ENCODE measurements at regions of chr19 and their contacts with region 1.

Region 1: DNA sequence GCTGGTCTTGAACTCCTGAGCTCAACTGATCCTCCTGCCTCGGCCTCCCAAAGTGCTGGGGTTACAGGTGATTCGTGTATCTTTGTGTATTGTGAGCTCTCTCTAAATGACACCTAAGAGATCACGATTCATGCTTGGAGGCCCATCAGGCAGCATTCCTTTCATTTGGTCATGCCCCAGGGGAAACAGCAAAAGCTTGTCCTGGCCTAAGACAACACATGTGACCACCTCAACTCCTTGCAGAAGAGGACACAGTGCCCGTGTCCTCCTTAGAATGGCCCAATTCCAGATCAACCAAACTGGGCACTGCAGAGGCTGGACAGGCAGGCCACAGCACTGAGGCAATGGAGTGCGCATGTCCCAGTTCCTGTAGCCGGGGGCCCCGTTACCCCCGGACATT is 32.5 kb downstream of the ZC3H4 start:
- DNase-seq: no peak
- ATAC-seq: no peak
- H3K4me3 ChIP-seq: no peak overlapping the region
- H3K27ac ChIP-seq: no peak overlapping the region
- H3K4me1 ChIP-seq: no peaks in the 10 kb centered on the region
- H3K27me3 ChIP-seq: no peaks in the 10 kb centered on the region
- CTCF ChIP-seq: no peak
- EP300 ChIP-seq: no peak
- POLR2A ChIP-seq: no peak
- RAD21 ChIP-seq: no peak

Region 2: DNA sequence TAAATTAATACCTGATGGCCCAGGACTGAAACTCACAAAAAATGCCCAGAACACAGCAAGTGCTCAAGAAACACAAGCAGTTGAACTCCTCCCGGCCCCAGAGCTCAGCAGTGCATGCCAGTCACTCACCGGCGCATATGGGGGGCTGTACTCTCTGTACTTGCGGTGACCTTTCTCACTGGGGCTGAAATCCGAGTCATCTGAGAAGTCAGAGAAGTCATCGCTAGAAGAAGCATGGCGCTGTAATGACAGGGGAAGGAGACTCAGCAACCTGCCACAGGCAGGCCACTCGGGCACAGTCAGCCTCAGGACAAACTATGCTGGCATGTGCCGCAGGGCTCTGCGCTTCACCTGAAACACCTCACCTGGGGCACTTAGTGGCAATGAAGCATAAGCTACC is 12.7 kb after region 1 on chr19:
- CTCF ChIA-PET with region 1: interaction called, 19 read pairs
- POLR2A ChIA-PET with region 1: no interaction called
- RAD21 ChIA-PET with region 1: interaction called, 3 read pairs
- SMC1A ChIA-PET with region 1: no interaction called
- in situ Hi-C with region 1: no loop called
- intact Hi-C with region 1: no loop called
- DNase-seq: no peak
- ATAC-seq: no peak
- H3K4me3 ChIP-seq: 0 out of 2 replicates have a peak overlapping the region, but pooled peaks have one; percentile 15
- H3K27ac ChIP-seq: peak overlapping the region; percentile 85
- H3K4me1 ChIP-seq: peaks cover 28% of the 10 kb centered on the region
- H3K27me3 ChIP-seq: no peaks in the 10 kb centered on the region
- CTCF ChIP-seq: 0 out of 6 replicates have a peak, but pooled peaks of 1 of the 3 experiments have one; percentile 6
- EP300 ChIP-seq: no peak
- POLR2A ChIP-seq: peak; percentile 74
- RAD21 ChIP-seq: no peak

Measured in GM12878 (cell line).